Activated CD4-positive, alpha-beta T cell treated with anti-CD3 and anti-CD28 coated beads for 36 hours (primary cell): ENCODE measurements at regions of chr7 and their contacts with region 1.

Region 1: DNA sequence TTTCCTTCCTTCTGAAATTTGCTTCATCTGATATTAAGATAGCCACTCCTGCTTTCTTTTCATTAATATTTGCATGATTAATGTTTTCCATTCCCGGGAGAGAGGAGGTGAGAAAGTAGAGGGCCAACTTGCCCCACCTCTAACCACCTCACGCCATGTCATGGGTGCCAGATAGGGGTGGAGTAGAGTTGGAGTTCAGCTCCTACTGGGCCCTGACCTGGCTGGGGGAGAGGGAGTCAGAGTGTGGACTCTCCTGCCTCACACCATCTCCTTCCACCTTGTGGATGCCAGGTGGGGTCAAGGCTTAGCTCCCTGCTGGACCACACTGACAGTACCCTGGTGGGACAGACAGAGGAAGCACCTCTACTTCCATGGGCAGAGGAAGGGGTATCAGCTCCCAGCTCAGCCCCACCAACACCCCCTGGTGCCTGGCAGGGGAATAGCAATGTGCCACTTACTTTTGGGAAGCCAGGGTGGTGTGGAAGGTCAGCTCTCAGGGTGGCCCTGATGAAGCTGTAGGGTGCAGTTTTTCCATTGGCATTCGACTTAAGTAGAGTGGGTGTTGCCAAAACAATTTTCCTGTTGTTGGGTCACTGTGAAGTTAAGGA is 28.0 kb downstream of the CHST12 start:
- DNase-seq: peak; percentile 68
- ATAC-seq: peak; percentile 76
- H3K4me3 Mint-ChIP-seq: no peak overlapping the region
- H3K27ac Mint-ChIP-seq: no peak overlapping the region
- H3K4me1 Mint-ChIP-seq: peaks cover 5% of the 10 kb centered on the region
- H3K27me3 Mint-ChIP-seq: no peaks in the 10 kb centered on the region

Region 2: GRCh38 chr7:2384354-2385243 is 46.8 kb before region 1 on chr7:
- CTCF ChIA-PET with region 1: interaction called, 3 read pairs
- POLR2A ChIA-PET with region 1: no interaction called
- intact Hi-C with region 1: loop called in 1 of 2 experiments (anchors 10 kb)
- DNase-seq: peak; percentile 30
- ATAC-seq: no peak
- H3K4me3 Mint-ChIP-seq: no peak overlapping the region
- H3K27ac Mint-ChIP-seq: no peak overlapping the region
- H3K4me1 Mint-ChIP-seq: no peaks in the 10 kb centered on the region
- H3K27me3 Mint-ChIP-seq: no peaks in the 10 kb centered on the region